Head of caudate nucleus (tissue), 42 donors: ENCODE measurements at regions of chrX and their contacts with region 1.

Region 1: GRCh38 chrX:47193475-47194193 is at the start of gene UBA1:
- DNase-seq: peak; percentile 87 to 99 (median 97)

Region 2: GRCh38 chrX:47384502-47384901 is 190.9 kb after region 1 on chrX:
- intact Hi-C with region 1: loop called (anchors 5 kb)
- DNase-seq: peak; percentile 9 to 86 (median 70)

Region 3: DNA sequence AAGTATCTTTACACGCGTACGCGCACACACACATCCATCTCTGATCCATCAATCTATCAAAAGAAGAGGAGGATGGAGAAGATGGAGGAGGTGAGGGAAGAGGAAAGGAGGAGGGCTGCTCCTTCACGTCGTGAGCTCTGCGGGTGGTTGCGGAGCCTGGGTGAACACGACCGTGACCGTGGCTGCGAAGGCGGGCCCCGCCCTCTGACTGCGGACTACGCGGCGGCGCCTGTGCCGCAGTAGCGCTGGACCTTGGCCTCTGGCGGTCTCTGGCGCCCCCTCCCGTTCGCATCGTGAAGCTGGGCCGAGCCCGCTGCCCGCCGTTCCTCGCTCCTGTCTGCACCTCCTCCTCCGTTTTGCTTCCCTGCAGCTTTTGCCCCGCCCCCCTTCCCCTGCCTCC is 329.7 kb after region 1 on chrX:
- intact Hi-C with region 1: loop called (anchors 2 kb)
- DNase-seq: peak; percentile 48 to 93 (median 84)